Activated CD8-positive, alpha-beta T cell treated with anti-CD3 and anti-CD28 coated beads, Interleukin-2, amount 10 ng/mL, durations not matched to agents 7 days and 5 days (primary cell): ENCODE measurements at regions of chr12 and their contacts with region 1.

Region 1: DNA sequence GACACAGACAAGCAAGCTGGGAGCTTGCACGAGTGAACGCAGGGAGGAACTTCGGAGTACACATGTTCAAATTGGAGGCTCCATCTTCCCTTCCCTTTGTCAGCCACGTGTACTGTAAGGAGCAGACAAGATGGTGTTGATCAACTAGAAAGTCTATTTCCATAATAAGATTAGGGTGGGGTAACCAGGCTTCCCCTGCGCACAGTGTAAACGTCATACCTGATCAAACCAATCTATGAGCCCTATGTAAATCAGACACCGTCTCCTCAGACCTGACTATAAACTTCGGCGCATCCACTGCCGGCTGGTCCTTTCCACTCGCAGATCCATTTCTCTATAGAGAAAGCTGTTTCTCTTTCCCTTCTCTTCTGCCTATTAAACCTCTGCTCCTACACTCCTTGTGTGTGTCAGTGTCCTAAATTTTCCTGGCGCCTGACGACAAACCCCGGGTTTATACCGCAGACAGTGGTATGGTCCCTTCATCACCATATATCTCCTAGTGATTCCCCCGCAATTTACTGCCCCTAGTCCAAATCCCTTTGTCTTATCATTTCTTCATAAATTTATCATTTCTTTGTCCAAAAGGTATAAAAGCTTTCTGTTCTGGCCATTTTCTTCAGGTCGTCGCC is 7.5 kb upstream of the ETFBKMT start:
- DNase-seq: no peak
- ATAC-seq: no peak
- H3K4me3 Mint-ChIP-seq: no peak overlapping the region
- H3K27ac Mint-ChIP-seq: no peak overlapping the region
- H3K4me1 Mint-ChIP-seq: peaks cover 12% of the 10 kb centered on the region
- H3K27me3 Mint-ChIP-seq: no peaks in the 10 kb centered on the region

Region 2: GRCh38 chr12:32062881-32063280 is 410.9 kb after region 1 on chr12:
- CTCF ChIA-PET with region 1: interaction called, 20 read pairs
- POLR2A ChIA-PET with region 1: no interaction called
- DNase-seq: no peak
- ATAC-seq: no peak
- H3K4me3 Mint-ChIP-seq: no peak overlapping the region
- H3K27ac Mint-ChIP-seq: no peak overlapping the region
- H3K4me1 Mint-ChIP-seq: peaks cover 14% of the 10 kb centered on the region
- H3K27me3 Mint-ChIP-seq: peaks cover 2% of the 10 kb centered on the region

Region 3: DNA sequence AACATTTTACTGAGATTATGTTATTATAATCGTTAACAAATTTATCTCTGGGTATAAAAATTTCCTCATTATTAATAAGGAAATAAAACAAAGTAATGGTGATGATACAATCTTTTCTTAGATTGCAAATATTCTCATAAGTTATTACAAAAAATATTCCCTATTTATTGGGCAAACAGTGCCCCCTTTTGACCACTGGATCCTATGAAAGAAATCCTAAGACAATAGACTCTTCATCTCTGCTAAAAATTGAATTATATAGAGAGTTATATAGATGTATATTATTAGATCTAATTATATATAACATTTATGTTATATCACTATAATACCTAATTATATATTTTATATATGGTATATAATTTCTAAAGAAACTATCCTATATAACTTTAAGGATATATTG is 653.2 kb after region 1 on chr12:
- CTCF ChIA-PET with region 1: interaction called, 24 read pairs
- POLR2A ChIA-PET with region 1: no interaction called
- DNase-seq: peak; percentile 28
- ATAC-seq: no peak
- H3K4me3 Mint-ChIP-seq: no peak overlapping the region
- H3K27ac Mint-ChIP-seq: no peak overlapping the region
- H3K4me1 Mint-ChIP-seq: no peaks in the 10 kb centered on the region
- H3K27me3 Mint-ChIP-seq: no peaks in the 10 kb centered on the region

Region 4: GRCh38 chr12:32312049-32312670 is 660.2 kb after region 1 on chr12:
- CTCF ChIA-PET with region 1: interaction called, 50 read pairs
- POLR2A ChIA-PET with region 1: no interaction called
- DNase-seq: no peak
- ATAC-seq: peak; percentile 61
- H3K4me3 Mint-ChIP-seq: no peak overlapping the region
- H3K27ac Mint-ChIP-seq: no peak overlapping the region
- H3K4me1 Mint-ChIP-seq: peaks cover 6% of the 10 kb centered on the region
- H3K27me3 Mint-ChIP-seq: no peaks in the 10 kb centered on the region